Prostate gland (tissue), 2 donors: ENCODE measurements at regions of chr16 and their contacts with region 1.

Region 1: DNA sequence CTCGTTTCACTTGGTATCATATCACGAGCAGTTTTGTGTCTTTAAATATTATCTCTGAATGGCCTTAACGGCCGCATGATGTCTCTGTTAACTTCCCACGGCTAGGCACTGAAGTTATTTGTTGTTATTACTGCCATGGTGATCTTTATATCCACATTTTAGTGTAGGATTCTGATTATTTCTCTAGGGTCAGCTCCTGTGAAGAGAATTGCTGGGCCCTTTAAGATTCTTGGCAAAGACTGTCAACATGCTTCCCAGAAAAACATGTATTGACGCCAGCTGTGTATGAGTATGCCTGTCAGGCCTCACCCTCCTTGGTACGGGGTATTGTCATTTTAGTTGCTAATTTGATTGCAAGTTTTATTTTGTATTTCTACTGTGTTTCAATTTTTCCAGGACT is 263.5 kb downstream of the SNX29 start:
- DNase-seq: no peak
- H3K4me3 ChIP-seq: no peak overlapping the region
- H3K27ac ChIP-seq: no peak overlapping the region
- H3K4me1 ChIP-seq: no peaks in the 10 kb centered on the region
- H3K27me3 ChIP-seq: no peaks in the 10 kb centered on the region
- CTCF ChIP-seq: no peak
- POLR2A ChIP-seq: no peak

Region 2: GRCh38 chr16:12584488-12585223 is 344.6 kb after region 1 on chr16:
- intact Hi-C with region 1: loop called (anchors 10 kb)
- DNase-seq: no peak
- H3K4me3 ChIP-seq: no peak overlapping the region
- H3K27ac ChIP-seq: no peak overlapping the region
- H3K4me1 ChIP-seq: no peaks in the 10 kb centered on the region
- H3K27me3 ChIP-seq: no peaks in the 10 kb centered on the region
- CTCF ChIP-seq: no peak
- POLR2A ChIP-seq: no peak